HEK293 (cell line): ENCODE measurements at regions of chr2 and their contacts with region 1.

Region 1: GRCh38 chr2:199459286-199460016 is 1.7 kb upstream of the SATB2 start:
- H3K4me3 ChIP-seq: peak overlapping the region; percentile 63
- H3K27ac ChIP-seq: peak overlapping the region; percentile 100
- H3K4me1 ChIP-seq: peaks cover 4% of the 10 kb centered on the region; the same call in 1 of the 2 replicates
- CTCF ChIP-seq: peak; percentile 77; the same call in 1 of the 2 replicates

Region 2: DNA sequence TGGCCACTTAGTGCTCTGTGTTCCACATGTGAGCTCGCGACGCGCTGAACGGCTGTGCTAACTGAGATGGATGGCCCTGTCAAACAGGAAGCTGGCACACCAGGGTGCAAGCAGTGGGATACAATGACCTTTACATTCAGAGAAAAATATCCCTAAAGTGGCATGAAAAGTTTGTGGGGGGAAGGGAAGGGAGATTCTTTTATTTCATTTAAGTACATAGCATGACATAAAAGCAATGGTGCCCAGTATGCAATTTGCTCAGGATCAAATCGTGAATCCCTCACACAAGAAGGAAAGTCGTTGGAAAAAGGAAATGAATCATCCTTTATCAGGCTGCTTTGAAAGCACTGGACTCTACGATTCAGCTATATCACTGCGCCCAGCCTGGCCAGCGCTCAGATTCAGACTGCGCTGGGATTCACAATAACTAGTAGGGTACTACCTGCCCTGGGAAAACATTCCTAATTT is 27.7 kb before region 1 on chr2:
- CTCF ChIA-PET with region 1: no interaction called
- POLR2A ChIA-PET with region 1: no interaction called
- H3K4me3 ChIP-seq: no peak overlapping the region
- H3K27ac ChIP-seq: no peak overlapping the region
- H3K4me1 ChIP-seq: peaks cover 20% of the 10 kb centered on the region
- CTCF ChIP-seq: no peak

Region 3: GRCh38 chr2:199471443-199472057 is 12.1 kb after region 1 on chr2:
- CTCF ChIA-PET with region 1: interaction called, 10 read pairs
- POLR2A ChIA-PET with region 1: interaction called, 13 read pairs
- H3K4me3 ChIP-seq: peak overlapping the region; percentile 2
- H3K27ac ChIP-seq: no peak overlapping the region
- H3K4me1 ChIP-seq: no peaks in the 10 kb centered on the region
- CTCF ChIP-seq: peak; percentile 89